ENCODE measurements at regions of chr17 and their contacts with region 1.

Region 1: GRCh38 chr17:4366327-4367063 is at the start of gene UBE2G1:
- DNase-seq: peak; percentile 98
- H3K4me3 ChIP-seq: peak within 1 kb of the TSS; percentile 98
- H3K27ac ChIP-seq: peak within 1 kb of the TSS; percentile 99
- H3K4me1 ChIP-seq: peaks cover 77% of the 10 kb centered on the region
- CTCF ChIP-seq: peak; percentile 76
- total RNA-seq, gene UBE2G1: 115 and 124 TPM in 2 replicates

Region 2: DNA sequence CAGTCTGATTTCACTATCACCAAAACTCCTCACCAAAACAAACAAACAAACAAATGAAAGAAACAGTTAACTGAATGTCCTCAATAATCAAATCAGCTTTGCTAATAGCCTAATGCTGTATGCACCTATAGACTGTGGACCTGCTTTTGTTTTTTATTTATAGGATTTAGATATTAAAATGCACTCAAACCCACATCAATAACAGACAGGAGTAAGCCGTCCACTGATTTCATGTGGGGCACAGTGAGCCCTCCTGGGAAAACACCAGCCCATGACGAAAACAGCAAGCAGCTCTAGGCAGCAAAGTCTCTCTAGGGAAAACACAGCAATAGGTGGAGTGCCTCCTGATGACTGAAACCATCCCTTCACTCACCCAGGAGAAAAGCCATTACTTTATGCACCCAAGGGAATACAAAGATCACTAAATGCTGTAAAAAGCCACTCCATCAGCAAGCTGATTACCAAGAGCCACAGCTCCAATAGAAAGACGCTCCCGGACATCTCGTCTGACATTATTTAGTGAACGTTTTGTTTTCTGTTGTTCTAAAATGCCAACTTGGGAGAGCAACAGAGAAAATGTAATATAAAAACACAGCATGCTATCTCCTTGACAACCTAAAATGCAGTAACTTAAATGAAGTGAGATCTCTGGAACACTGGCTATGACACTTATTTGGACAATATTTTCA is 150.5 kb before region 1 on chr17:
- CTCF ChIA-PET with region 1: no interaction called
- POLR2A ChIA-PET with region 1: no interaction called
- intact Hi-C with region 1: loop called (anchors 1 kb)
- DNase-seq: no peak
- H3K4me3 ChIP-seq: no peak overlapping the region
- H3K27ac ChIP-seq: no peak overlapping the region
- H3K4me1 ChIP-seq: peaks cover 10% of the 10 kb centered on the region
- CTCF ChIP-seq: no peak

Region 3: DNA sequence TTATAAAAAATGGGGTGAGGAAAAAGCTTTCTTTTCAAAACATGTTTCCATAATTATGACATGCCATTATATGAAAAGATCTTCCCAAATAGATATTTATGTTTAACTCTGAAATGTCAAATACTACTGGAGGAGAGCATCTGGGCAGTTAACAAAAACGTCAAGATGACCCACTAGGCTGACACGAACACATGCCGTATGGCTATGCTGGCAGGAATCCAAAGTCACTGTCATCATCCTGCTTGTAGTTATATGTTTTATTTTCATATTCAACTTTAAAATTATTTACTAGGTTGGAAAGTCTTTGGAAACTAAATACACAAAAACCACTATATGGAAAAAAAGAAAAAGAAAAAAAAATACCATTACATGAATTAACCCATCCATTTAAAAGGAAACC is 130.0 kb before region 1 on chr17:
- CTCF ChIA-PET with region 1: no interaction called
- POLR2A ChIA-PET with region 1: no interaction called
- intact Hi-C with region 1: no loop called
- DNase-seq: no peak
- H3K4me3 ChIP-seq: no peak overlapping the region
- H3K27ac ChIP-seq: no peak overlapping the region
- H3K4me1 ChIP-seq: no peaks in the 10 kb centered on the region
- CTCF ChIP-seq: no peak

Region 4: GRCh38 chr17:4297351-4297750 is 69.1 kb before region 1 on chr17:
- CTCF ChIA-PET with region 1: no interaction called
- POLR2A ChIA-PET with region 1: no interaction called
- intact Hi-C with region 1: loop called (anchors 5 kb)
- DNase-seq: no peak
- H3K4me3 ChIP-seq: no peak overlapping the region
- H3K27ac ChIP-seq: no peak overlapping the region
- H3K4me1 ChIP-seq: peaks cover 31% of the 10 kb centered on the region
- CTCF ChIP-seq: no peak

Region 5: DNA sequence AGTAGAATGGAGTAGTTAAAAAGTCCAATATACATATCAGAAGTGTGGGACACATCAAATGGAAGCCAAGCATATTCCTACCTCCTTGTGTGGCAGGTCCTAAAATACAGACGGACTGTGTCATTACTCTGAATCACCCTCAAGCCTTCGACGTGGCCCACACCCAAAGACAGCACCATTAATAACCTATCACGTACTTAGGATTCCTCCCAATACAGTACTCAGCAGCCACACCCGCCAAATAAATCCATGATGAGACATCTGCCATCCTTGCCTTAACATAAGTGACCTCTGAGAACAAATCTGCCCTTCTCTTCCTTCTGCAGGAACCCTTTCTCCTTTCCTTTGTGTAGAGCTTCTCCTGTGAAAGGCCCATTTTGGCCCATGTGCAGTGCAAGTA is 38.9 kb before region 1 on chr17:
- CTCF ChIA-PET with region 1: no interaction called
- POLR2A ChIA-PET with region 1: no interaction called
- intact Hi-C with region 1: no loop called
- DNase-seq: no peak
- H3K4me3 ChIP-seq: no peak overlapping the region
- H3K27ac ChIP-seq: no peak overlapping the region
- H3K4me1 ChIP-seq: peaks cover 29% of the 10 kb centered on the region
- CTCF ChIP-seq: no peak

Region 6: GRCh38 chr17:4389079-4389478 is 22.6 kb after region 1 on chr17:
- CTCF ChIA-PET with region 1: no interaction called
- POLR2A ChIA-PET with region 1: interaction called, 13 read pairs
- intact Hi-C with region 1: no loop called
- DNase-seq: no peak
- H3K4me3 ChIP-seq: no peak overlapping the region
- H3K27ac ChIP-seq: peak overlapping the region; percentile 46
- H3K4me1 ChIP-seq: peaks cover 62% of the 10 kb centered on the region
- CTCF ChIP-seq: no peak

Region 7: GRCh38 chr17:4412933-4413831 is 46.7 kb after region 1 on chr17:
- CTCF ChIA-PET with region 1: no interaction called
- POLR2A ChIA-PET with region 1: no interaction called
- intact Hi-C with region 1: loop called (anchors 2 kb)
- DNase-seq: peak; percentile 94
- H3K4me3 ChIP-seq: peak overlapping the region; percentile 7
- H3K27ac ChIP-seq: peak overlapping the region; percentile 2
- H3K4me1 ChIP-seq: peaks cover 17% of the 10 kb centered on the region
- CTCF ChIP-seq: peak; percentile 93